HCT116 (cell line): ENCODE measurements at regions of chr14 and their contacts with region 1.

Region 1: DNA sequence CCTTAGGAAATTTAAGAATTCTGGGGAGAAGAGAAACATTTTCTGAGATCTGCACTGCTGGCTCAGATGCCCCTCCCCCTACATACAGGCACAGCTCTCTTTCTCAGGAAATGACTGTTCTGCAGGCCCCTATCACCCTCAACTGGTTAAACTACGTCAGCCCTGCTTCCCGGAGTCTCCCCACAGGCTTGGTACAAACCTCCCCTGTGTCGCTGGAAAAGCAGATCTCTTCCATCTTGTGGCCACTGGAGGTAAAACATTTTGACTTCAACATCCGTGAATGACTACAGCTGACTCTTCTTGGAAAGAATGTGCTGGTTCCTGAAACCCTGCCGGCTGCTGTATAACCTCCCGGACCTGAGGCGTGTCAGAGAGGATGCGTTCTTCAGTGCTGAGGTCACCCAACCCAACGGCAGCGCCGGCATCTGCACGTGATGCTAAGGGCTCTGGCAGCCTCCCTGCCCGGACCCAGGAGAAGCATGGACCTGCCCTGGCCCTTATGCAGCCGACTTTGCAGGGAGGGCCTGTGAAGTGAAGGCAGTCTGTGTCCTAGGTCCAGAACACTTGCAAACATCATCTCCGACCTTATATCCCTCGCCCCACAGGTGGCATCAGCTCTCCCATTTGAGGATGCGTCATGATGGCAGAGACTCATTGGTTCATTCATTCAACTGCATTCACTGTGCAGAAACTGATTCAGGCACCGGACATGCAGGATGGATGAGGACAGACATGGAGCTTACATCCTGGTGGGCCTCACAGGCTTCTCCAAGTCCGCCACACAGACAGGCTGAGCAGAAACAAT is 129.3 kb downstream of the GCH1 start:
- DNase-seq: peak; percentile 98
- ATAC-seq: peak; percentile 87
- H3K4me3 ChIP-seq: peak overlapping the region; percentile 15 to 40
- H3K27ac ChIP-seq: peak overlapping the region; percentile 77
- H3K4me1 ChIP-seq: peaks cover 20 to 29% of the 10 kb centered on the region in 2 experiments
- H3K27me3 ChIP-seq: no peaks in the 10 kb centered on the region
- CTCF ChIP-seq: peak; percentile 50 to 92 (median 63); a peak in 5 of 6 replicates
- POLR2A ChIP-seq: no peak
- RAD21 ChIP-seq: peak; percentile 92

Region 2: GRCh38 chr14:54366736-54367735 is 406.3 kb before region 1 on chr14:
- CTCF ChIA-PET with region 1: interaction called, 9 read pairs
- POLR2A ChIA-PET with region 1: no interaction called
- RAD21 ChIA-PET with region 1: no interaction called
- intact Hi-C with region 1: loop called (anchors 1 kb)
- DNase-seq: peak; percentile 49
- ATAC-seq: peak; percentile 98
- H3K4me3 ChIP-seq: no peak overlapping the region
- H3K27ac ChIP-seq: no peak overlapping the region
- H3K4me1 ChIP-seq: peaks cover 0 to 8% of the 10 kb centered on the region in 2 experiments; a peak in 1 of 4 replicates
- H3K27me3 ChIP-seq: no peaks in the 10 kb centered on the region
- CTCF ChIP-seq: peak; percentile 70 to 93 (median 79)
- POLR2A ChIP-seq: no peak
- RAD21 ChIP-seq: peak; percentile 86

Region 3: GRCh38 chr14:54488646-54489317 is 284.6 kb before region 1 on chr14 and contains the start of gene GMFB:
- CTCF ChIA-PET with region 1: no interaction called
- POLR2A ChIA-PET with region 1: no interaction called
- RAD21 ChIA-PET with region 1: no interaction called
- intact Hi-C with region 1: loop called (anchors 5 kb)
- DNase-seq: peak; percentile 86
- ATAC-seq: peak; percentile 91
- H3K4me3 ChIP-seq: peak within 1 kb of the TSS; percentile 87 to 94
- H3K27ac ChIP-seq: peak within 1 kb of the TSS; percentile 96
- H3K4me1 ChIP-seq: peaks cover 21 to 38% of the 10 kb centered on the region in 2 experiments
- H3K27me3 ChIP-seq: no peaks in the 10 kb centered on the region
- CTCF ChIP-seq: peak; percentile 23 to 66 (median 54); a peak in 5 of 6 replicates
- POLR2A ChIP-seq: peak; percentile 46
- RAD21 ChIP-seq: peak; percentile 28; the same call in 1 of the 2 replicates
- total RNA-seq, gene GMFB: 53.8 TPM

Region 4: GRCh38 chr14:54566410-54567223 is 206.8 kb before region 1 on chr14 and contains the start of gene SAMD4A:
- CTCF ChIA-PET with region 1: interaction called, 131 read pairs
- POLR2A ChIA-PET with region 1: interaction called, 24 read pairs
- RAD21 ChIA-PET with region 1: interaction called, 10 to 16 read pairs
- intact Hi-C with region 1: loop called (anchors 1 kb)
- DNase-seq: no peak
- ATAC-seq: peak; percentile 56
- H3K4me3 ChIP-seq: peak within 1 kb of the TSS; percentile 61 to 73
- H3K27ac ChIP-seq: peak within 1 kb of the TSS; percentile 74
- H3K4me1 ChIP-seq: peaks cover 10 to 50% of the 10 kb centered on the region in 2 experiments
- H3K27me3 ChIP-seq: no peaks in the 10 kb centered on the region
- CTCF ChIP-seq: peak in 2 of 3 experiments; percentile 17 to 27; a peak in 1 of 6 replicates
- POLR2A ChIP-seq: peak; percentile 14
- RAD21 ChIP-seq: peak; percentile 40
- total RNA-seq, gene SAMD4A: 9.0 TPM

Region 5: GRCh38 chr14:54829455-54830224 is 56.3 kb after region 1 on chr14:
- CTCF ChIA-PET with region 1: no interaction called
- POLR2A ChIA-PET with region 1: no interaction called
- RAD21 ChIA-PET with region 1: interaction called in 1 of 2 experiments, 14 read pairs
- intact Hi-C with region 1: no loop called
- DNase-seq: no peak
- ATAC-seq: no peak
- H3K4me3 ChIP-seq: no peak overlapping the region
- H3K27ac ChIP-seq: no peak overlapping the region
- H3K4me1 ChIP-seq: no peaks in the 10 kb centered on the region
- H3K27me3 ChIP-seq: no peaks in the 10 kb centered on the region
- CTCF ChIP-seq: no peak
- POLR2A ChIP-seq: no peak
- RAD21 ChIP-seq: no peak

Region 6: DNA sequence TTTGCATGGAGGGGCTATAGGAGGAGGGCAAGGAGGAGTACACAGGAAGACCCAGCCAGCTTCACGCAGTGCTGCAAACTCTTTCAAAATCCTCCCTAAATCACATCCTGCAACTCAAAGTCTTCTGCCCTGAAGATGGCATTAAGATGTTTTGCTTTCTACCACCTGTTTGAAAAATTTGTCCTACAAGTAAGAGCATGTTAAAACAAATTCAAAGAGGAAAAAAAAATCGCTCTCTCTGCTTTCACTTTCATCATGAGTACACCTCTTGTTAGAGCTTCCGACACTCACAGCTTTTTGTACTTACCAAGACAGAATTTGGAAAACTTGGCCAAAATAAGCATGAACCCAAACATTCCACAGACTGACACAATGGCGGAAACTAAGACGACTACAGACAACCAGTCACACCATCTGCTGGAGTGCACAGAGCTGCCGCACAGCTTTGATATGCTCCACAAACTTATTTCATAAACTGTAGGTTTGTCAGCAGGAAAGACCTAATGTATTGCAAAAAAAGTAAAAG is 107.9 kb after region 1 on chr14:
- CTCF ChIA-PET with region 1: no interaction called
- POLR2A ChIA-PET with region 1: no interaction called
- RAD21 ChIA-PET with region 1: no interaction called
- intact Hi-C with region 1: no loop called
- DNase-seq: no peak
- ATAC-seq: no peak
- H3K4me3 ChIP-seq: no peak overlapping the region
- H3K27ac ChIP-seq: no peak overlapping the region
- H3K4me1 ChIP-seq: no peaks in the 10 kb centered on the region; a peak in 1 of 4 replicates
- H3K27me3 ChIP-seq: no peaks in the 10 kb centered on the region
- CTCF ChIP-seq: no peak
- POLR2A ChIP-seq: no peak
- RAD21 ChIP-seq: no peak

Region 7: GRCh38 chr14:54922598-54922997 is 149.2 kb after region 1 on chr14:
- CTCF ChIA-PET with region 1: no interaction called
- POLR2A ChIA-PET with region 1: no interaction called
- RAD21 ChIA-PET with region 1: no interaction called
- intact Hi-C with region 1: no loop called
- DNase-seq: no peak
- ATAC-seq: no peak
- H3K4me3 ChIP-seq: no peak overlapping the region
- H3K27ac ChIP-seq: no peak overlapping the region
- H3K4me1 ChIP-seq: no peaks in the 10 kb centered on the region
- H3K27me3 ChIP-seq: no peaks in the 10 kb centered on the region
- CTCF ChIP-seq: no peak
- POLR2A ChIP-seq: no peak
- RAD21 ChIP-seq: no peak

Region 8: DNA sequence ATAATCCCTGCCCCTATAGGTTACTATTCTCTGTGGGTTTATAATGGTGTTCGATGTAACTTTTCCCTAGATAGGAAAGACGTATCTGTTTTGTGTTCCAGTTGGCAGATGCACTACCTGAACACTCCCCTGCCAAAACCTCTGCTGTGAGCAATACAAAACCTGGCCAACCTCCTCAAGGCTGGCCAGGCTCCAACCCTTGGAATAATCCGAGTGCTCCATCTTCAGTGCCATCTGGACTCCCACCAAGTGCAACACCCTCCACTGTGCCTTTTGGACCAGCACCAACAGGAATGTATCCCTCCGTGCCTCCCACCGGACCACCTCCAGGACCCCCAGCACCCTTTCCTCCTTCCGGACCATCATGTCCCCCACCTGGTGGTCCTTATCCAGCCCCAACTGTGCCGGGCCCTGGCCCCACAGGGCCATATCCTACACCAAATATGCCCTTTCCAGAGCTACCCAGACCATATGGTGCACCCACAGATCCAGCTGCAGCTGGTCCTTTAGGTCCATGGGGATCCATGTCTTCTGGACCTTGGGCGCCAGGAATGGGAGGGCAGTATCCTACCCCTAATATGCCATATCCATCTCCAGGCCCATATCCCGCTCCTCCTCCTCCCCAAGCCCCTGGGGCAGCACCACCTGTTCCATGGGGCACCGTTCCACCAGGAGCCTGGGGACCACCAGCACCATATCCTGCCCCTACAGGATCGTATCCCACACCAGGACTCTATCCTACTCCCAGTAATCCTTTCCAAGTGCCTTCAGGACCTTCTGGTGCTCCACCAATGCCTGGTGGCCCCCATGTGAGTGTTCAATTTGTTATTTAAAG is 289.4 kb after region 1 on chr14:
- CTCF ChIA-PET with region 1: no interaction called
- POLR2A ChIA-PET with region 1: no interaction called
- RAD21 ChIA-PET with region 1: no interaction called
- intact Hi-C with region 1: no loop called
- DNase-seq: no peak
- ATAC-seq: no peak; the same call in 1 of the 2 replicates
- H3K4me3 ChIP-seq: no peak overlapping the region
- H3K27ac ChIP-seq: no peak overlapping the region
- H3K4me1 ChIP-seq: no peaks in the 10 kb centered on the region
- H3K27me3 ChIP-seq: no peaks in the 10 kb centered on the region
- CTCF ChIP-seq: no peak
- POLR2A ChIP-seq: no peak
- RAD21 ChIP-seq: no peak